Caco-2 (cell line): ENCODE measurements at regions of chr12 and their contacts with region 1.

Region 1: GRCh38 chr12:31959161-31959700 is at the start of gene RESF1:
- DNase-seq: peak; percentile 97 to 98
- H3K4me3 ChIP-seq: peak within 1 kb of the TSS; percentile 69
- H3K4me3 Mint-ChIP-seq: peak within 1 kb of the TSS; percentile 84
- H3K27ac Mint-ChIP-seq: peak within 1 kb of the TSS; percentile 93
- H3K4me1 ChIP-seq: peaks cover 38% of the 10 kb centered on the region
- H3K4me1 Mint-ChIP-seq: peaks cover 42% of the 10 kb centered on the region
- H3K27me3 ChIP-seq: no peaks in the 10 kb centered on the region
- H3K27me3 Mint-ChIP-seq: no peaks in the 10 kb centered on the region
- CTCF ChIP-seq: peak in 1 of 2 experiments; percentile 0
- total RNA-seq, gene RESF1: 110 and 118 TPM in 2 replicates

Region 2: DNA sequence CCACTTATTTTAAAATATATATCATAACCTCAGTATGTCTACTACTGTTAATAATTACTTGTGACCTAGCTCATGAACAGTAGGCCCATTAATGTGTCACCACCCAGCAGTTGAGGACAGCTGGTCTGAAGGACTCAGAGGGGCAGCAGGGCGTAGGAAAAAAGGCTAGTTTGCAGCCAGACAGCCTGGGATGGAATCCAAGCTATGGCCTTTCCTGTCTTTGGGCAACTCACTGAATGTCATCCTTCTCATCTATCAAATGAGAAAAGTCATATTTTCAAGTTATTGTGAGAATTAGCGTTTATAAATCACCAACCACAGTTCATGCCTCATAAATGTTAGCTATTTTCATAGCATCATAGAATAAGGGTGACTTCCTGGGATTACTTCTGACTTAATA is 380.6 kb before region 1 on chr12:
- CTCF ChIA-PET with region 1: no interaction called
- POLR2A ChIA-PET with region 1: no interaction called
- intact Hi-C with region 1: no loop called
- DNase-seq: no peak
- H3K4me3 ChIP-seq: no peak overlapping the region
- H3K4me3 Mint-ChIP-seq: no peak overlapping the region
- H3K27ac Mint-ChIP-seq: no peak overlapping the region
- H3K4me1 ChIP-seq: peaks cover 11% of the 10 kb centered on the region; the same call in 1 of the 2 replicates
- H3K4me1 Mint-ChIP-seq: no peaks in the 10 kb centered on the region
- H3K27me3 ChIP-seq: no peaks in the 10 kb centered on the region
- H3K27me3 Mint-ChIP-seq: no peaks in the 10 kb centered on the region
- CTCF ChIP-seq: no peak

Region 3: GRCh38 chr12:31659087-31659933 is 299.9 kb before region 1 on chr12 and contains the start of gene ETFBKMT:
- CTCF ChIA-PET with region 1: no interaction called
- POLR2A ChIA-PET with region 1: interaction called, 5 read pairs
- intact Hi-C with region 1: loop called (anchors 2 kb)
- DNase-seq: peak; percentile 99
- H3K4me3 ChIP-seq: peak within 1 kb of the TSS; percentile 73
- H3K4me3 Mint-ChIP-seq: peak within 1 kb of the TSS; percentile 78
- H3K27ac Mint-ChIP-seq: peak within 1 kb of the TSS; percentile 80
- H3K4me1 ChIP-seq: peaks cover 4% of the 10 kb centered on the region; the same call in 1 of the 2 replicates
- H3K4me1 Mint-ChIP-seq: peaks cover 28% of the 10 kb centered on the region
- H3K27me3 ChIP-seq: no peaks in the 10 kb centered on the region
- H3K27me3 Mint-ChIP-seq: no peaks in the 10 kb centered on the region
- CTCF ChIP-seq: peak; percentile 51 to 74
- total RNA-seq, gene ETFBKMT: 1.6 and 2.1 TPM in 2 replicates

Region 4: GRCh38 chr12:31728917-31729640 is 230.2 kb before region 1 on chr12 and contains the start of gene AMN1:
- CTCF ChIA-PET with region 1: no interaction called
- POLR2A ChIA-PET with region 1: no interaction called
- intact Hi-C with region 1: loop called (anchors 1 kb)
- DNase-seq: peak; percentile 100
- H3K4me3 ChIP-seq: peak within 1 kb of the TSS; percentile 78
- H3K4me3 Mint-ChIP-seq: peak within 1 kb of the TSS; percentile 95
- H3K27ac Mint-ChIP-seq: peak within 1 kb of the TSS; percentile 98
- H3K4me1 ChIP-seq: peaks cover 35% of the 10 kb centered on the region
- H3K4me1 Mint-ChIP-seq: peaks cover 21% of the 10 kb centered on the region
- H3K27me3 ChIP-seq: no peaks in the 10 kb centered on the region
- H3K27me3 Mint-ChIP-seq: no peaks in the 10 kb centered on the region
- CTCF ChIP-seq: no peak
- total RNA-seq, gene AMN1: 6.2 and 8.8 TPM in 2 replicates

Region 5: GRCh38 chr12:31845613-31846415 is 113.4 kb before region 1 on chr12:
- CTCF ChIA-PET with region 1: no interaction called
- POLR2A ChIA-PET with region 1: no interaction called
- intact Hi-C with region 1: loop called (anchors 2 kb)
- DNase-seq: peak; percentile 58 to 76
- H3K4me3 ChIP-seq: no peak overlapping the region
- H3K4me3 Mint-ChIP-seq: no peak overlapping the region
- H3K27ac Mint-ChIP-seq: peak overlapping the region; percentile 31
- H3K4me1 ChIP-seq: peaks cover 20% of the 10 kb centered on the region
- H3K4me1 Mint-ChIP-seq: peaks cover 13% of the 10 kb centered on the region
- H3K27me3 ChIP-seq: no peaks in the 10 kb centered on the region
- H3K27me3 Mint-ChIP-seq: no peaks in the 10 kb centered on the region
- CTCF ChIP-seq: no peak

Region 6: GRCh38 chr12:31970199-31970598 is 11.0 kb after region 1 on chr12:
- CTCF ChIA-PET with region 1: no interaction called
- POLR2A ChIA-PET with region 1: no interaction called
- intact Hi-C with region 1: no loop called
- DNase-seq: no peak
- H3K4me3 ChIP-seq: no peak overlapping the region
- H3K4me3 Mint-ChIP-seq: no peak overlapping the region
- H3K27ac Mint-ChIP-seq: no peak overlapping the region
- H3K4me1 ChIP-seq: 0 out of 2 replicates have a peak, but pooled peaks cover 4% of the 10 kb centered on the region
- H3K4me1 Mint-ChIP-seq: peaks cover 13% of the 10 kb centered on the region
- H3K27me3 ChIP-seq: no peaks in the 10 kb centered on the region
- H3K27me3 Mint-ChIP-seq: no peaks in the 10 kb centered on the region
- CTCF ChIP-seq: no peak

Region 7: DNA sequence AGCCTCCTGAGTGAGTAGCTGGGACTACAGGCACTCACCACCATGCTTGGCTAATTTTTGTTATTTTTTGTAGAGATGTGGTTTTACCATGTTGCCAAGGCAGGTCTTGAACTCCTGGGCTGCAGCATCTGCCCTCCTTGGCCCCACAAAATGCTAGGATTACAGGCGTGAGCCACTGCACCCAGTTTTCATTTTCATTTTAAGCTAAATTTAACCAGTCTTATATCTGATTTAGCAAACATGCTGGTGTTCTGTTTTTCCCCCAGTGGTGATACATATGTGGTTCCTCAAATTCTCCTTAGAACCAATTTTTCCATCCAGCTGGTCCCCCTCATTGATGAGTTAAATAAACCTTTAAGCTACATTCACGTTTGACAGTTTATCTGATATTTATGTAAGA is 103.7 kb after region 1 on chr12:
- CTCF ChIA-PET with region 1: interaction called, 3 read pairs
- POLR2A ChIA-PET with region 1: no interaction called
- intact Hi-C with region 1: loop called (anchors 5 kb)
- DNase-seq: no peak
- H3K4me3 ChIP-seq: no peak overlapping the region
- H3K4me3 Mint-ChIP-seq: no peak overlapping the region
- H3K27ac Mint-ChIP-seq: no peak overlapping the region
- H3K4me1 ChIP-seq: no peaks in the 10 kb centered on the region
- H3K4me1 Mint-ChIP-seq: no peaks in the 10 kb centered on the region
- H3K27me3 ChIP-seq: no peaks in the 10 kb centered on the region
- H3K27me3 Mint-ChIP-seq: no peaks in the 10 kb centered on the region
- CTCF ChIP-seq: no peak

Region 8: DNA sequence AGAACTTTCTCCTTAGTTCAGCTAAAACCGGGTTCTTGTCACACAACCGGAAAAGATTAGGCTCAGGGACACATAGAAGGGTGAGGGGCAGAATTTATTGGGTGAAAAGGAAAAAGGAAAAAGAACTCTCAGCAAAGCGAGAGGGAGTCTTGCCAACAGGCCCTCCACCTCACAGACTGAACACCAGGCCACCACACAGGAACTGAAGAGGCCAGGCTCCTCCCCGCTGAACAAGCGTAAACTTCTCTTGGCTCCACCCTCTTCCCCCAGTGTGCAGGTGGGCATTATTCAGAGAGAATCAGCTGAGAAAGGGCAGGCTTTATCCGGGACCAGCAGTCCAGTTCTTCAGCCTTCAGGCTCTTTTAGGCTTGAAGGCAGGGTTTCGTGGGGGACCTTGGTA is 314.5 kb after region 1 on chr12:
- CTCF ChIA-PET with region 1: interaction called, 3 read pairs
- POLR2A ChIA-PET with region 1: no interaction called
- intact Hi-C with region 1: loop called (anchors 10 kb)
- DNase-seq: peak in 1 of 2 experiments; percentile 35
- H3K4me3 ChIP-seq: no peak overlapping the region
- H3K4me3 Mint-ChIP-seq: peak overlapping the region; percentile 22
- H3K27ac Mint-ChIP-seq: peak overlapping the region; percentile 61
- H3K4me1 ChIP-seq: peaks cover 47% of the 10 kb centered on the region
- H3K4me1 Mint-ChIP-seq: peaks cover 44% of the 10 kb centered on the region
- H3K27me3 ChIP-seq: no peaks in the 10 kb centered on the region
- H3K27me3 Mint-ChIP-seq: no peaks in the 10 kb centered on the region
- CTCF ChIP-seq: no peak